Adrenal gland (tissue), 19 donors: ENCODE measurements at regions of chr4 and their contacts with region 1.

Region 1: DNA sequence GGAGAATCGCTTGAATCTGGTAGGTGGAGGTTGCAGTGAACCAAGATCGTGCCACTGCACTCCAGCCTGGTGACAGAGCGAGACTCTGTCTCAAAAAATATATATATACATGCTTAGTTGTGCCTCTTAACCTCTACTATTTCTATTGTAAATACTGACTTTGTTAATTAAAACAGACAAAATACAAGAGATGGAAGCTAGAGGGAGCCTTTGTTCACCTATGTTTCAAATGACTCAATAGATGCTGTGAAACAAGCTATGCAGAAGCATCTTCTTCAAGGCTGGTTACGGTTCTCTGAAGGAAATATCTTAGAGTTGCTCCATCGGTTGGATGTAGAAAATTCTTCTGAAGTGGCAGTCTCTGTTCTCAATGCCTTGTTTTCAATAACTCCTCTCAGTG is 6.2 kb downstream of the NCAPG start:
- DNase-seq: no peak
- H3K4me3 ChIP-seq: no peak overlapping the region
- H3K27ac ChIP-seq: no peak overlapping the region
- H3K4me1 ChIP-seq: no peaks in the 10 kb centered on the region
- H3K27me3 ChIP-seq: no peaks in the 10 kb centered on the region
- CTCF ChIP-seq: peak; percentile 43 to 73 (median 64)
- POLR2A ChIP-seq: no peak

Region 2: GRCh38 chr4:17647927-17648326 is 169.1 kb before region 1 on chr4:
- intact Hi-C with region 1: no loop called
- DNase-seq: no peak
- H3K4me3 ChIP-seq: no peak overlapping the region
- H3K27ac ChIP-seq: no peak overlapping the region
- H3K4me1 ChIP-seq: no peaks in the 10 kb centered on the region
- H3K27me3 ChIP-seq: no peaks in the 10 kb centered on the region
- CTCF ChIP-seq: no peak
- POLR2A ChIP-seq: no peak

Region 3: DNA sequence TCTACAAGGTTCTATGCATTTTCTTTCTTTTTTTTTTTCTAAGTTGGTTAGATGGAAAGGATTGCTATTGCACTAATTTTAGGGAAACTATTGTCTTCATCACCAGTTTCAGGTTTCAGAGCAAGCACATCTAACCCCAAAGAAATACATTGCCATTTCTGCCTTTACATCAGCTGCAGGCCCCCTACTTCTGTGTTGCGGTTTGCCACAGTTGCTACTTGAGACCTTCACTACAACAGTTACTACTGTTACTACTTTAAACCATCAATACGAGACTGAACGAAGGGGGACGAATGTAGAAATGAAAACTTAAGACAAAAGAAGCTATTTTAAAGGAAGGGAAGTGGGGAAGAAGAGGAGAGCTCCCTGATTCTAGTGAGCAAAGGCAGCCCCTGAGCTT is 461.2 kb after region 1 on chr4:
- intact Hi-C with region 1: no loop called
- DNase-seq: no peak
- H3K4me3 ChIP-seq: no peak overlapping the region
- H3K27ac ChIP-seq: no peak overlapping the region
- H3K4me1 ChIP-seq: no peaks in the 10 kb centered on the region
- H3K27me3 ChIP-seq: no peaks in the 10 kb centered on the region
- CTCF ChIP-seq: no peak
- POLR2A ChIP-seq: no peak

Region 4: GRCh38 chr4:18593445-18594002 is 776.5 kb after region 1 on chr4:
- intact Hi-C with region 1: loop called in 1 of 2 experiments (anchors 5 kb)
- DNase-seq: peak; percentile 45 to 84 (median 65)
- H3K4me3 ChIP-seq: no peak overlapping the region
- H3K27ac ChIP-seq: no peak overlapping the region
- H3K4me1 ChIP-seq: peaks cover 0 to 4% of the 10 kb centered on the region in 2 donors
- H3K27me3 ChIP-seq: peaks cover 6% of the 10 kb centered on the region
- CTCF ChIP-seq: peak; percentile 75 to 85 (median 82)
- POLR2A ChIP-seq: no peak